GM12878 (cell line): ENCODE measurements at regions of chr7 and their contacts with region 1.

Region 1: DNA sequence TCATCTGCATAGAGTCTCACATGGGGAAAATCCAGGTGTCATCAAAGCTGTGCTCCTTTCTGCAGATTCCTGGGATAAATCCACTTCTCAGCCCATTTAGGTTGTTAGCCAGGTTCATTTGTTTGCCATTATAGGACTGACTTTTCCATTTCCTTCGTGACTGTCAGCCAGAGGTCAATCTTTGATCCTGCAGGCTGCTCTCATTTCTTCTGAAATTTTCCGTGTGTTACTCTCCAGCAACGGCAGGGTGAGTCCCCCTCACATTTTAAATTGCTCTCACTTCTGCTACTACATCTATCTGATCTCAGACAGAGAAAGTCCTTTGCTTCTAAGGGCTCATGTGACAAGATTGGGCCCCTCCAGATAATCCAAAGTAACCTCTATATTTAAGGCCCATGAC is 150.7 kb upstream of the BET1 start:
- DNase-seq: no peak
- ATAC-seq: peak; percentile 78
- H3K4me3 ChIP-seq: no peak overlapping the region
- H3K27ac ChIP-seq: no peak overlapping the region
- H3K4me1 ChIP-seq: no peaks in the 10 kb centered on the region
- H3K27me3 ChIP-seq: no peaks in the 10 kb centered on the region
- CTCF ChIP-seq: peak in 1 of 3 experiments; percentile 27; a peak in 1 of 6 replicates
- EP300 ChIP-seq: no peak
- POLR2A ChIP-seq: no peak
- RAD21 ChIP-seq: peak; percentile 27; the same call in 1 of the 2 replicates

Region 2: GRCh38 chr7:94170836-94171235 is 16.0 kb after region 1 on chr7:
- CTCF ChIA-PET with region 1: interaction called, 11 read pairs
- POLR2A ChIA-PET with region 1: no interaction called
- RAD21 ChIA-PET with region 1: interaction called, 10 read pairs
- SMC1A ChIA-PET with region 1: interaction called, 14 read pairs
- in situ Hi-C with region 1: no loop called
- intact Hi-C with region 1: loop called (anchors 1 kb)
- DNase-seq: peak; percentile 51
- ATAC-seq: peak; percentile 97
- H3K4me3 ChIP-seq: no peak overlapping the region
- H3K27ac ChIP-seq: no peak overlapping the region
- H3K4me1 ChIP-seq: no peaks in the 10 kb centered on the region; the same call in 1 of the 2 replicates
- H3K27me3 ChIP-seq: no peaks in the 10 kb centered on the region
- CTCF ChIP-seq: no peak
- EP300 ChIP-seq: peak; percentile 56 to 76; a peak in 2 of 4 replicates
- POLR2A ChIP-seq: no peak
- RAD21 ChIP-seq: no peak